ENCODE measurements at regions of chr5 and their contacts with region 1.

Region 1: GRCh38 chr5:133111299-133111698 is 59.5 kb downstream of the HSPA4 start:
- DNase-seq: peak; percentile 80
- ATAC-seq: peak; percentile 81
- H3K4me3 ChIP-seq: no peak overlapping the region
- H3K27ac ChIP-seq: no peak overlapping the region
- H3K4me1 ChIP-seq: no peaks in the 10 kb centered on the region
- H3K27me3 ChIP-seq: no peaks in the 10 kb centered on the region
- CTCF ChIP-seq: peak; percentile 90

Region 2: GRCh38 chr5:133247881-133248624 is 136.8 kb after region 1 on chr5:
- CTCF ChIA-PET with region 1: interaction called, 3 read pairs
- POLR2A ChIA-PET with region 1: no interaction called
- intact Hi-C with region 1: loop called (anchors 2 kb)
- DNase-seq: no peak
- ATAC-seq: no peak
- H3K4me3 ChIP-seq: no peak overlapping the region
- H3K27ac ChIP-seq: no peak overlapping the region
- H3K4me1 ChIP-seq: peaks cover 44% of the 10 kb centered on the region
- H3K27me3 ChIP-seq: no peaks in the 10 kb centered on the region
- CTCF ChIP-seq: peak; percentile 57

Region 3: GRCh38 chr5:133287500-133287899 is 176.2 kb after region 1 on chr5:
- CTCF ChIA-PET with region 1: interaction called, 13 read pairs
- POLR2A ChIA-PET with region 1: no interaction called
- intact Hi-C with region 1: loop called (anchors 1 kb)
- DNase-seq: peak; percentile 53
- ATAC-seq: peak; percentile 46
- H3K4me3 ChIP-seq: no peak overlapping the region
- H3K27ac ChIP-seq: no peak overlapping the region
- H3K4me1 ChIP-seq: peaks cover 29% of the 10 kb centered on the region
- H3K27me3 ChIP-seq: no peaks in the 10 kb centered on the region
- CTCF ChIP-seq: peak; percentile 73

Region 4: DNA sequence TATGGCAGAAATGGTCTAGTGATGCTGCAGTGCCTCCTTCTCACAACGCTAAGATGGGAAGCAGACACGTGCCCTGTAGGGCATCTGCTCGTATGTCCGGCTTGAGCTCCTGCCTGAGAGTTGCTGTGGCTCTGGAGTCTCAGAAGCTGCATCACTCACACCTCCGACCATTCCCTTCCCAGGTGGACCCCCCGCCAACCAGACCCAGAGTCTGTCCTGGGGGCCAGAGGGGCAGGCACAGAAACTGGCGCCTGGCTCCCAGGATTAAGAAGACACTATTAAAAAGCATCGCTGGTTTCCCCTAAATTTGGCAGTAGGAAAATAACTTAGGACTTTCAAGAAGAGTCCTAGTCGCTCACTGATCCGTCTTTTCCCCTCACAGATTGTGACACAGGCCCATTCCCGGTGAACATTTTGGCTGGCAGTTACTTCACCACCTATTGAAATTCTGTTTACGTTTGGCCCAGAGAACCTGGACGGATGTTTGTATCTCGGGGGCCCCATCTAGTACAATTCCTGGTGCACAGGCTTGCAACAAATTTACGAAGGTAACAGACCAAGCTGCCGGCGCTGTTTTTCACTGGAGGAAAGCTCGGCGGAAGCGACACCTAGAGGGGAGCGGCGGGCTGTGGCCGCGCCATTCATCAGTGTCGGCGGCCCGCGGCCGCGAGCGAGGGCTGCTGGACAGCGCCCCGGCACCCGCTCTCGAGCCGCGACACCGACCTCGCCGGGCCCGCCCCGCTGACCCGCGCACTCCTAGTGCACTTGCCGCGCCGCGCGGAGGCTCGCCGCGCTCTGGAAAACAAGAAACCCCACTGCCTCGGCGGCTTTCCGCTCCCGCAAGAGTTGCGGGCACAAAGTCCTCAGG is 499.4 kb after region 1 on chr5:
- CTCF ChIA-PET with region 1: no interaction called
- POLR2A ChIA-PET with region 1: no interaction called
- intact Hi-C with region 1: loop called (anchors 2 kb)
- DNase-seq: peak; percentile 72
- ATAC-seq: peak; percentile 90
- H3K4me3 ChIP-seq: peak overlapping the region; percentile 73
- H3K27ac ChIP-seq: no peak overlapping the region
- H3K4me1 ChIP-seq: no peaks in the 10 kb centered on the region
- H3K27me3 ChIP-seq: no peaks in the 10 kb centered on the region
- CTCF ChIP-seq: peak; percentile 53

Region 5: DNA sequence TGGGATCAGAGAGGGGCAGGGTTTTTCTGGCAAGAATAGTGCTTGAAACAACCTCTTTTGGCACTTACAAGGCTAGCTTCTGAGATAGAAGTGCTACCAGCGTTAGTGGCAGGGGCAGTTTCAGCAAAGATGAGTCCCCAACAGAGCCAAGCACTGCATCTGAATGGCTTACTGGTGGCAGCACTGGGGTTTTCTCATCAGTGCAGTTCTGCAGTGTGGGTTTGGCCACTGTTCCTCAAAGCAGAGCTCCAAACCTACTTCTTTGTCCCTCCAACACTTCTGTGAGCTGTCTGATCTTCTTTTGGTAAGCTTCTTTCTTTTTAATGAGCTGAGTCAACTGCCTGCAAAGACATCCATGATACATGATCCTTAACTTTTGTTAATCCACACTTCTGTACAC is 530.9 kb after region 1 on chr5:
- CTCF ChIA-PET with region 1: interaction called, 11 read pairs
- POLR2A ChIA-PET with region 1: no interaction called
- intact Hi-C with region 1: no loop called
- DNase-seq: no peak
- ATAC-seq: no peak
- H3K4me3 ChIP-seq: no peak overlapping the region
- H3K27ac ChIP-seq: no peak overlapping the region
- H3K4me1 ChIP-seq: no peaks in the 10 kb centered on the region
- H3K27me3 ChIP-seq: no peaks in the 10 kb centered on the region
- CTCF ChIP-seq: no peak